ENCODE measurements at regions of chr14 and their contacts with region 1.

Region 1: DNA sequence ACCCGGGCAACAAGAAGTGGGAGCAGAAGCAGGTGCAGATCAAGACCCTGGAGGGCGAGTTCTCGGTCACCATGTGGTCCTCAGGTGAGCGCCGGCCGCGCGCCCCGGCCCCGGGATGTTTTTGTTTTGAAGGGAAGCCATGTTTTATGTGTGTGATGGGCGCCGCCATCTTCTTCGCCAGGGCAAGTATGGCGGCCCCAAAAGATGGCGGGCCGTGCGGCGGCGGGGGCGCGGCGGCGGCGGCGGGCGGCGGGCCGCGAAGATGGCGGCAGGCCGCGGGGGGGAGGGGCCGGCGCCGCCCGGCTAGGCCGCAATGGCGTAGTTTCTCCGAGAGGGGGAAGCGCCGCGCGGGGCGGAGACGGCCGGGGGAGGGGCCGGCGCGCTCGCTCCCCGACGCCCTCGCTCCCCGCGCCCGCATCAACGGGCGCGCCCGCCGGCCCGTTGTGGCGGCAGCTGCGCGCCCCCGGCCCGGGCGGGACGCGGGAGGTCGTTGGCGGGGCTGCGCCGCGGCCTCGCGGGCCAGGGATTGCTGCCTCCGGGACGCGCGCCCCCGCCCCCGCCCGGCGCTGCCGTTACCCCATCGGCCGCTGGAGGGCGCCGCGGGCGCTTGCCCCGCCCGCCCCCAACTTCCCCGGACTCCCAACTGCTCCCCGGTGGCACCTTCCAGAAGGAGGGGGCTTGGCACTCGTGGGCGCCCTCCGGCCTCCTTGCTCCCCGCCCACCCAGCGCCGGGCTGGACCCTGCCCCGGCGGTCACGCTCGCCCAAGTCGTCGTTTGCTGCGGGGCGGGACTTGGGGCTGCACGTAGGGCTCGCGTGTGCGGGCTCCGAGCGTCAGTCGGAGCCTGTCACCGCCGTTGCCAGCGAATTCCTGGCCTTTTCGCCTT is 1.1 kb downstream of the YY1 start:
- DNase-seq: peak; percentile 83
- H3K4me3 Mint-ChIP-seq: peak overlapping the region; percentile 87
- H3K27ac Mint-ChIP-seq: peak overlapping the region; percentile 83
- H3K4me1 Mint-ChIP-seq: peaks cover 48% of the 10 kb centered on the region
- H3K27me3 Mint-ChIP-seq: no peaks in the 10 kb centered on the region

Region 2: GRCh38 chr14:100192672-100193416 is 47.2 kb before region 1 on chr14:
- intact Hi-C with region 1: loop called (anchors 2 kb)
- DNase-seq: peak; percentile 100
- H3K4me3 Mint-ChIP-seq: peak overlapping the region; percentile 64
- H3K27ac Mint-ChIP-seq: peak overlapping the region; percentile 84
- H3K4me1 Mint-ChIP-seq: peaks cover 9% of the 10 kb centered on the region
- H3K27me3 Mint-ChIP-seq: no peaks in the 10 kb centered on the region

Region 3: DNA sequence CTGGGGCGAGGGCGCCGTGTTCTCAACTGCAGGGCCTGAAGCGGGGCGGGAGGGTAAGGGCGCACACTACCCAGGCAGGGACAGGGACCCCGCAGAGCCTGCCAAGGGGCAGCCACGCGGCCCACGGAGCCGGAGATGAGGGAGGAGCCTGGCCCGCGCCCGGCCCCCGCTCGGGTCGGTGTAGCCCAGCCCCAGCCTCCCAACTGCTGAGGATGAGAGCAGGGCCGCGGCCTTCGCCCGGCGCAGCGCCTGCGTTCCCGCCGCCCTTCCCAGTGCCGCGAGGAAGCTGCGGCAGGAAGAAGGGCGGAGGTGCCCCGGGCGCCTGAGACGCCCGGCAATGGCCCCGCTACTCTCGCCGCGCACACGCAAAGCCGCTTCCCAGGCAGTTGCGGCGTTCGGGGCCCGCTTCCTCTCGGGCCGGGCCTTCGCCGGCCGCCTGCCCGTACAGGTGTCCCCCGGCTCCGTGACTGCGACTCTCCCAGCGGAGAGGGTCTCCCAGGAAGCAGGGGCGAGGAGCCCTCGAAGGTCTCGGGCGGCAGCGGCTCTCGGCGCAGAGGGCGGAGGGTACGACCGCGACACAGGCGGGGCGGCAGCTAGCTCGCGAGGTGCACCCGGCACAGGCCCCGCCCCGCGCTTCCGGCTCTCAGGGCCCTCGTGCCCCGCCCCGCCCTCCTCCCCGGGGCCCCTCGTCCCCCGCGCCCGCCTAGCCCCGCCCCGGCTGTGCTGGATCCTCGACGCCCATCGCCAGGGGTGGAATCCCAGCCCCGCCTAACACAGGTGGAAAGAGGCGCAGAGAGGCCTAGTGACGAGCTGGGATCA is 25.9 kb before region 1 on chr14:
- intact Hi-C with region 1: loop called (anchors 1 kb)
- DNase-seq: peak; percentile 86
- H3K4me3 Mint-ChIP-seq: peak overlapping the region; percentile 81
- H3K27ac Mint-ChIP-seq: peak overlapping the region; percentile 83
- H3K4me1 Mint-ChIP-seq: peaks cover 16% of the 10 kb centered on the region
- H3K27me3 Mint-ChIP-seq: no peaks in the 10 kb centered on the region

Region 4: GRCh38 chr14:100221533-100222223 is 18.4 kb before region 1 on chr14:
- intact Hi-C with region 1: loop called (anchors 1 kb)
- DNase-seq: peak; percentile 68
- H3K4me3 Mint-ChIP-seq: no peak overlapping the region
- H3K27ac Mint-ChIP-seq: no peak overlapping the region
- H3K4me1 Mint-ChIP-seq: peaks cover 8% of the 10 kb centered on the region
- H3K27me3 Mint-ChIP-seq: no peaks in the 10 kb centered on the region

Region 5: DNA sequence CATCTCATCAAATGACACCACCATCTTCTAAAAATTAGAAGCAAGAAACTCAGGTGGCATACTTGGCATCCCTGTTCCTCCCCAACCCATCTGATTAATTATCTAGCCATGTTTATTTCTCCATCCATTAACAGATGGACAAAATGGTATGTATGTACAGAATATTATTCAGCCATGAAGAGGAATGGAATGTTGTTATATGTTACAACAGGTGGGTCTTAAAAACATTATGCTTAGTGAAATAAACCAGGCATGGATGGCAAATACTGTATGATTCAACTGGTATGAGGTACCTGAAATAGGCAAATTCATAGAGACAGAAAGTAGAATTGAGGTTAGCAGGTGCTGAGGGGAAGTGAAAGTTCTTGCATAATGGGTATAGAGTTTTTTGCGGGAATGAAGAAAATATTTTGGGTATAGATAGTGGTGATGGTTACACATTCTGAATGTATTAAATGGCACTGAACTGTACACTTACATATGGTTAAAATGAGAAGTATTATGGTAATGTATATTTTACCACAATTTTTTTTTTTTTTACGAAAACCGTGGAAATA is 16.3 kb after region 1 on chr14:
- intact Hi-C with region 1: loop called (anchors 2 kb)
- DNase-seq: no peak
- H3K4me3 Mint-ChIP-seq: no peak overlapping the region
- H3K27ac Mint-ChIP-seq: no peak overlapping the region
- H3K4me1 Mint-ChIP-seq: peaks cover 62% of the 10 kb centered on the region
- H3K27me3 Mint-ChIP-seq: no peaks in the 10 kb centered on the region

Region 6: GRCh38 chr14:100278702-100279101 is 38.6 kb after region 1 on chr14:
- intact Hi-C with region 1: loop called (anchors 5 kb)
- DNase-seq: no peak
- H3K4me3 Mint-ChIP-seq: no peak overlapping the region
- H3K27ac Mint-ChIP-seq: peak overlapping the region; percentile 12
- H3K4me1 Mint-ChIP-seq: peaks cover 37% of the 10 kb centered on the region
- H3K27me3 Mint-ChIP-seq: no peaks in the 10 kb centered on the region

Measured in activated T-helper 2 cell treated with anti-CD3 and anti-CD28 coated beads, Interferon-gamma antibody, Interleukin-2, Interleukin-4, amounts not matched to agents 10 μg/mL and 5 μg/mL and 100 μg/mL, durations not matched to agents 14 hours and 24 hours and 36 hours (primary cell).